Vagina (tissue), 2 donors: ENCODE measurements at regions of chr2 and their contacts with region 1.

Region 1: GRCh38 chr2:221429741-221430491 is 142.2 kb downstream of the EPHA4 start:
- DNase-seq: no peak
- H3K4me3 ChIP-seq: no peak overlapping the region
- H3K27ac ChIP-seq: no peak overlapping the region
- H3K4me1 ChIP-seq: no peaks in the 10 kb centered on the region
- H3K27me3 ChIP-seq: no peaks in the 10 kb centered on the region
- CTCF ChIP-seq: no peak
- POLR2A ChIP-seq: no peak

Region 2: GRCh38 chr2:220821683-220822082 is 608.2 kb before region 1 on chr2:
- intact Hi-C with region 1: loop called (anchors 5 kb)
- DNase-seq: no peak
- H3K4me3 ChIP-seq: no peak overlapping the region
- H3K27ac ChIP-seq: no peak overlapping the region
- H3K4me1 ChIP-seq: no peaks in the 10 kb centered on the region
- H3K27me3 ChIP-seq: no peaks in the 10 kb centered on the region
- CTCF ChIP-seq: no peak
- POLR2A ChIP-seq: no peak

Region 3: DNA sequence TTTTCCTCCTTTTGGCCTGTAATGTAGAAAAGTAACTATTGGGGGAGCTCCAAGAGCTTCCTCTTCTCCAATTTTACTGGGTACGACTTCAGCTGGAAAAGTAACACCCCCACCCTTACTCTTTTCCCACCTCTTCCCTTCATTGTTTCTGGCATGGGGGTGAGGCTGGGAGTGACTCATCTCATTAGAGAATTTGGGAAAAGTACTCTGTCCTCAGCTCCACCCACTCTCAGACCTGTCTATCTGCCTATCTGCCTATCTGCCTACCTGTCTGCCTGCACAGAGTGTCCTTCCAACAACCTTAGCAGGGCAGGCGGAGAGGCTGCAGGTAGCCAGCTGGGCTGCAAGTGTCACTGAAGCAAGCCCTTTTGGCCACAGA is 48.6 kb after region 1 on chr2:
- intact Hi-C with region 1: no loop called
- DNase-seq: no peak
- H3K4me3 ChIP-seq: no peak overlapping the region
- H3K27ac ChIP-seq: no peak overlapping the region
- H3K4me1 ChIP-seq: no peaks in the 10 kb centered on the region
- H3K27me3 ChIP-seq: no peaks in the 10 kb centered on the region
- CTCF ChIP-seq: no peak
- POLR2A ChIP-seq: no peak